ENCODE measurements at regions of chr4 and their contacts with region 1.

Region 1: DNA sequence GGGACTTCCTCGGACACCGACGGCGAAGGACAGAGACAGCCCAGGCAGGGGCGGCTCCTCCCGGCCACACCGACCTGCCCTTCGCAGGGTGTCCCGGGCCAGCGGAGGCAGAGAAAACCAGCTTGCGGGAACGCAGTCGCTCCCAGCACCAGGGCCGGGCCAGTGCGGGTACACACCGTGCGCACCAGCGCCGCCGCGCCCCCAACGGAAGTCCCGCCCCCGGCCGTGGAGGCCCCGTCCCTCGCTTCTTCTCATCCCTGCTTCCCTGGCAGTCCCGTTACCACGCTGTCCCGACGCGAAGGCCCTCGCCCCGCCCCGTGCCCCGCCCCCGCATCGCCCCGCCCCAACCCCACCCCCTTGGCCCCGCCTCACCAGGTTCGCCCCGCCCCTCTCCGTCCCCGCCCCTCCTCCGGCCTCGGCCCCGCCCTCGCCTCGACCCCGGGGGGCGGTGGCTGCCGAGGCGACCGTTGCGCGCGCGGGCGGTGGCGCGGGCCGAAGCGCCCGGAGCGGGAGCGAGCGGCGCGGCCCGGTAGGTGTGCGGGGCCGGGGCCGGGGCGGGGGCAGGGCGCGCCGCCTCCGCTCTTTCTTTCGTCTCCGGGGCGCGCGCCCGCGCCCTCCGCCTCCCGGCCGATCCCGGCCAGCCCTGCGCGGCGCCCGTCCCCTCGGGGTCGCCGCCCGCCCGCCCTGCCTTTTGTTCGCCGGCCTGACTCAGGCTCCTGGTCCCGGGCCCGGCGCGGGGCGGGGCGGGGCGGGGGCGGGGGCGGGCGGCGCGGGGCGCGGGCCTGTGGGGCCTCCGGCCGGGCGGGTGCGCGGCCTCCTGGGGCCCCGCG is at the start of gene RGS12:
- DNase-seq: peak; percentile 98
- H3K4me3 ChIP-seq: peak within 1 kb of the TSS; percentile 59 to 80 (median 68)
- H3K27ac ChIP-seq: peak within 1 kb of the TSS; percentile 89 to 99 (median 90)
- H3K4me1 ChIP-seq: peaks cover 0 to 26% (median 21%) of the 10 kb centered on the region in 4 donors
- H3K27me3 ChIP-seq: peaks cover 0 to 3% (median 0%) of the 10 kb centered on the region in 3 donors
- CTCF ChIP-seq: no peak
- EP300 ChIP-seq: no peak
- POLR2A ChIP-seq: peak; percentile 90 to 91
- total RNA-seq, gene RGS12: 15.7 to 21.6 (median 17.8) TPM

Region 2: GRCh38 chr4:2745981-2746806 is 546.6 kb before region 1 on chr4:
- intact Hi-C with region 1: no loop called
- DNase-seq: no peak
- H3K4me3 ChIP-seq: no peak overlapping the region
- H3K27ac ChIP-seq: peak overlapping the region in 1 of 4 donors; percentile 3
- H3K4me1 ChIP-seq: peaks cover 0 to 11% (median 3%) of the 10 kb centered on the region in 4 donors
- H3K27me3 ChIP-seq: no peaks in the 10 kb centered on the region
- CTCF ChIP-seq: no peak
- EP300 ChIP-seq: no peak
- POLR2A ChIP-seq: no peak

Region 3: DNA sequence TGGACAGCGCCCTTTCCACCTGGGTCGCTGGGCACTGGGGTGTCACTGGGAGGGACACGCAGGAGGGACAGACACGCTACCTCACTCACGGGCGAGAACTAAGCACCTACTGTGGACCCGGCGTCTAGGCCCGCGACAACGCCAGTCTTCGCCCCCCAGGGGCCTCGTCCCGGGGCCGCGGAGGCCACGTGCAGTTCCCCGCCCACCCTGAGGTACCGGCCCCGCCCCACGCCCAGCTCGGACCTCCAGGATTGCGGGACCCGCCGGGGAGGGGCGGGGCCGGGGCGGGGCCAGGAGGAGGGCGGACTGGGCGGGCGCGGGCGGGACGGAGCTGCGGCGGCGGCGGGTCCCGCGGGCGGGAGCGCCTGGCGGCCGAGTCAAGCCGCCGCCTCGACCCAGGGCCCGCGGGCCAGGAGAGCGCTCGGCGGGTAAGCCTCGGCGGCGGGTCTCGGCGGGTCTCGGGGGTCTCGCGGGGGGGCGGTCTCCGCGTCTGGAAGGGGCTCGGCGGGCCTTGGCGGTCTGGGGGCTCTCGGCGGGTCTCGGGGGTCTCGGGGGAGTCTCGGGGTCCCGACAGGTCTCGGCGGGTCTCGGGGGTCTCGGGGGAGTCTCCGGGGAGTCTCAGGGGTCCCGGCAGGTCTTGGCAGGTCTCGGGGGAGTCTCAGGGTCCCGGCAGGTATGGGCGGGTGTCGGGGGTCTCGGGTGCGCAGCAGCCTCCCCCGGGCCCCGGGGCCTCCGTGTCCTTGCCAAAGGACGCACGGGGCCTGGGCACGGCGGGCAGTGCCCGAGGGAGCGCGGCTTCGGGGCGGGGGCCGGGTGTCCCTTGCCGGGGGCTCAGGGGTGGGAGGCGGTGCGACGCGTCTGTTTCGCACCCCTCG is 499.8 kb before region 1 on chr4 and contains the start of gene SH3BP2:
- intact Hi-C with region 1: no loop called
- DNase-seq: peak; percentile 88
- H3K4me3 ChIP-seq: peak within 1 kb of the TSS; percentile 50 to 76 (median 64)
- H3K27ac ChIP-seq: peak within 1 kb of the TSS; percentile 71 to 81 (median 79)
- H3K4me1 ChIP-seq: peaks cover 0 to 60% (median 55%) of the 10 kb centered on the region in 4 donors
- H3K27me3 ChIP-seq: no peaks in the 10 kb centered on the region
- CTCF ChIP-seq: no peak
- EP300 ChIP-seq: no peak
- POLR2A ChIP-seq: no peak
- total RNA-seq, gene SH3BP2: 18.4 to 49.3 (median 24.2) TPM

Region 4: GRCh38 chr4:2862528-2862927 is 430.3 kb before region 1 on chr4:
- intact Hi-C with region 1: no loop called
- DNase-seq: no peak
- H3K4me3 ChIP-seq: no peak overlapping the region
- H3K27ac ChIP-seq: peak overlapping the region; percentile 27 to 62 (median 56)
- H3K4me1 ChIP-seq: peaks cover 0 to 100% (median 94%) of the 10 kb centered on the region in 4 donors
- H3K27me3 ChIP-seq: no peaks in the 10 kb centered on the region
- CTCF ChIP-seq: no peak
- EP300 ChIP-seq: no peak
- POLR2A ChIP-seq: no peak

Region 5: GRCh38 chr4:2963175-2963965 is 329.4 kb before region 1 on chr4 and contains the starts of genes GRK4 and NOP14:
- intact Hi-C with region 1: loop called (anchors 10 kb)
- DNase-seq: peak; percentile 99
- H3K4me3 ChIP-seq: peak within 1 kb of the TSS; percentile 85 to 98 (median 90)
- H3K27ac ChIP-seq: peak within 1 kb of the TSS; percentile 83 to 92 (median 86)
- H3K4me1 ChIP-seq: peaks cover 0 to 29% (median 24%) of the 10 kb centered on the region in 4 donors
- H3K27me3 ChIP-seq: no peaks in the 10 kb centered on the region
- CTCF ChIP-seq: peak in 1 of 4 experiments; percentile 26
- EP300 ChIP-seq: peak in 1 of 4 donors; percentile 41
- POLR2A ChIP-seq: peak in 1 of 2 donors; percentile 18
- total RNA-seq, gene GRK4: 3.9 to 10.2 (median 6.7) TPM
- total RNA-seq, gene NOP14: 12.5 to 19.1 (median 15.1) TPM

Region 6: GRCh38 chr4:3074078-3074795 is 218.5 kb before region 1 on chr4 and contains the starts of genes HTT and HTT-AS:
- intact Hi-C with region 1: loop called (anchors 10 kb)
- DNase-seq: peak; percentile 98
- H3K4me3 ChIP-seq: peak within 1 kb of the TSS; percentile 80 to 86 (median 82)
- H3K27ac ChIP-seq: peak within 1 kb of the TSS; percentile 86 to 91 (median 89)
- H3K4me1 ChIP-seq: peaks cover 0 to 31% (median 21%) of the 10 kb centered on the region in 4 donors
- H3K27me3 ChIP-seq: no peaks in the 10 kb centered on the region
- CTCF ChIP-seq: no peak
- EP300 ChIP-seq: no peak
- POLR2A ChIP-seq: peak; percentile 49 to 62
- total RNA-seq, gene HTT: 17.0 to 41.5 (median 26.5) TPM
- total RNA-seq, gene HTT-AS: not detected

Region 7: GRCh38 chr4:3122081-3122563 is 170.7 kb before region 1 on chr4:
- intact Hi-C with region 1: loop called (anchors 5 kb)
- DNase-seq: no peak
- H3K4me3 ChIP-seq: no peak overlapping the region
- H3K27ac ChIP-seq: peak overlapping the region; percentile 73 to 86 (median 76)
- H3K4me1 ChIP-seq: peaks cover 0 to 53% (median 38%) of the 10 kb centered on the region in 4 donors
- H3K27me3 ChIP-seq: no peaks in the 10 kb centered on the region
- CTCF ChIP-seq: no peak
- EP300 ChIP-seq: no peak
- POLR2A ChIP-seq: no peak

Region 8: DNA sequence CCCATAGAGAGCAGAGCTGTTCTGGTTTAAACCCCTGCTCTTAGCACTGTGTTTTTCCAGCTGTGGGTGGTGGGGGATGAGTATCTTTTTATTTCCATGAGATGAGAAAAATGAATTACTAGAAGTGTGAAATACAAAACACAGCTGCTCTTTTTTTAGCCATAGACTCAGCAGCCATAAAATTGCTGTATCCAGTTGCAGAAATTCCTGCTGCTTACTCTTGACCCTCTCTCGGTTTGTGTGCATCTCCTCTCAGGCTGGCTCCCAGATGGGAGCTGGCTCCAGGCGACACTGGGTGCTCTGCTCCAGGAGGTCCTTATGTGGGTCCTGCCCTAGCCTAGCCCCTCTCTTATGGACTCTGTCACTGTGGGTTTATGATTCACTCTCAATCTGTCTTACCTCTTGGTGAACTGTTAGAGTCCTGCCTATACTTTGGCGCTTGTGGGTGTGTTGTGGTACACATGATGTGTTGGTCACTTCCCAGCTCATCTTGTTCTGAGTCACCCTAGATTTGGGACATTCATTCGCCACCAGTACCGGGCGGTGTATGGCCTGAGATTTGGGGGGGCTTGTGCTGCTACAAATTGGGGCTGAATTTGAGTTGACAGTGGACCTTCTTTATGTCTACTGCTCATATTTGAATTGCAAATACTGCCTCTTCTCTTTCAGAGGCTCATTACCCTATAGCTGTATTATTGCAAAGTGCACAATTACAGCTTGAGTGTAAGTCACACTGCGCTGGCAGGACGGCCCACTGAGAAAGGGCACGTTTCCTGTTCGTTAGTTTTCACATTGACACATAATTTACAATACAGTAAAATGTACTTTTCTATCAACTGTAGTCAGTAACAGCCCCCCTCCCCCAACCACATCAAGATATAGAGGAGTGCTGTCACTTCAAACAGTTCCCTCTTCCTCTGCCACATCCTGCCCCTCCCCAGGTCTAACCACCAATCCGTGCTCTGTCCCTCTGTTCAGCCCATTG is 90.8 kb before region 1 on chr4:
- intact Hi-C with region 1: loop called (anchors 10 kb)
- DNase-seq: no peak
- H3K4me3 ChIP-seq: no peak overlapping the region
- H3K27ac ChIP-seq: peak overlapping the region; percentile 1 to 80 (median 73)
- H3K4me1 ChIP-seq: peaks cover 0 to 32% (median 23%) of the 10 kb centered on the region in 4 donors
- H3K27me3 ChIP-seq: no peaks in the 10 kb centered on the region
- CTCF ChIP-seq: no peak
- EP300 ChIP-seq: no peak
- POLR2A ChIP-seq: no peak

Region 9: GRCh38 chr4:3241898-3242524 is 50.8 kb before region 1 on chr4:
- intact Hi-C with region 1: loop called (anchors 2 kb)
- DNase-seq: peak; percentile 82
- H3K4me3 ChIP-seq: no peak overlapping the region
- H3K27ac ChIP-seq: peak overlapping the region in 3 of 4 donors; percentile 56 to 76 (median 72)
- H3K4me1 ChIP-seq: peaks cover 0 to 29% (median 23%) of the 10 kb centered on the region in 4 donors
- H3K27me3 ChIP-seq: no peaks in the 10 kb centered on the region
- CTCF ChIP-seq: no peak
- EP300 ChIP-seq: peak in 1 of 4 donors; percentile 18
- POLR2A ChIP-seq: no peak

Region 10: DNA sequence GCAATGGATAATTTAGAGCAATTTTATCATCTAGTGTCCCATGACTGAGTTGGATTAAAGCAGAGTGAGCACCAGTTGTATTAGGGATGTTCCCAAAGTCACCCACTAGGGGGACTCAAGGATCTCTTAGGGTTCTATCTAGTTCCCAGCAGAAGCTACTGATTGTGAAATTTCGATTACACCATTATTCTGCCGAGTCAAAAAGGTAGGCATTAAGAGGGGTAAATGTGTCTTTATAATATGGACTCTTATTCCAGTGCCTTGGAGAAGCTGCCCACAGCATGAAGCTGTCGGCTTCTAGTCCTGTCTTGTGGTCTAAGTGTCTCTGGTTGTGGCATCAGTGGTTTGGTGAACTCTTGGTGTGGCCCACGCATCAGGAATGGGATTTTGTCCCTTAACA is 53.4 kb after region 1 on chr4:
- intact Hi-C with region 1: no loop called
- DNase-seq: no peak
- H3K4me3 ChIP-seq: no peak overlapping the region
- H3K27ac ChIP-seq: no peak overlapping the region
- H3K4me1 ChIP-seq: peaks cover 0 to 17% (median 8%) of the 10 kb centered on the region in 4 donors
- H3K27me3 ChIP-seq: no peaks in the 10 kb centered on the region
- CTCF ChIP-seq: peak; percentile 62 to 95 (median 86)
- EP300 ChIP-seq: no peak
- POLR2A ChIP-seq: no peak

Region 11: GRCh38 chr4:3531879-3532713 is 239.3 kb after region 1 on chr4 and contains the start of gene LRPAP1:
- intact Hi-C with region 1: loop called (anchors 2 kb)
- DNase-seq: peak; percentile 95
- H3K4me3 ChIP-seq: peak within 1 kb of the TSS; percentile 67 to 97 (median 85)
- H3K27ac ChIP-seq: peak within 1 kb of the TSS; percentile 70 to 83 (median 76)
- H3K4me1 ChIP-seq: peaks cover 0 to 35% (median 29%) of the 10 kb centered on the region in 4 donors
- H3K27me3 ChIP-seq: no peaks in the 10 kb centered on the region
- CTCF ChIP-seq: no peak
- EP300 ChIP-seq: no peak
- POLR2A ChIP-seq: peak; percentile 89 to 90
- total RNA-seq, gene LRPAP1: 85.3 to 127 (median 99.6) TPM

Measured in sigmoid colon (tissue), 7 donors.